HepG2 (cell line): ENCODE measurements at regions of chr13 and their contacts with region 1.

Region 1: GRCh38 chr13:107867701-107868661 is 347.4 kb downstream of the LIG4 start:
- DNase-seq: no peak
- ATAC-seq: peak; percentile 80
- H3K4me3 ChIP-seq: no peak overlapping the region; a peak in 1 of 6 replicates
- H3K27ac ChIP-seq: no peak overlapping the region
- H3K4me1 ChIP-seq: no peaks in the 10 kb centered on the region
- H3K27me3 ChIP-seq: peaks cover 2 to 23% of the 10 kb centered on the region in 2 experiments; a peak in 2 of 5 replicates
- CTCF ChIP-seq: peak; percentile 40
- EP300 ChIP-seq: no peak
- POLR2A ChIP-seq: no peak
- RAD21 ChIP-seq: no peak

Region 2: DNA sequence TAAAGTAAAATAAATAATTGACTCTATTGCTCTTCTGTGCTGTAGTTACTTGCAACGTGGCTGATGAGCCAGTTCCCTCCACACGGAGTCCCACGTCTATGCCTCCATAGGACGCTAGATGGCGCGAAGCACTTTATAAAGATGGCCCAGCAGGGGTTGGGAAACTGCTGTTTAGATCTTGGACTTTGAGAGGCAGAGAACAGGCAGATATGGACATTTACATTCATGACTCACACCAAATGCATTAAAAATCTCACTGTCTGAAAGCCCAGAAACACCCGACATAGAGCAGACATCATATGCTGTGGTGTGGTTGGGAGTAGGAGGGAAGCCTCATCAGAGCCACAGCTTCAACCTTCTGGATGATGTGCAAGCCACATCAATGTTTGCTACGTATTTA is 656.9 kb before region 1 on chr13:
- CTCF ChIA-PET with region 1: no interaction called
- POLR2A ChIA-PET with region 1: no interaction called
- in situ Hi-C with region 1: loop called (anchors 25 kb)
- intact Hi-C with region 1: no loop called
- DNase-seq: peak; percentile 78
- ATAC-seq: peak; percentile 100
- H3K4me3 ChIP-seq: no peak overlapping the region
- H3K27ac ChIP-seq: no peak overlapping the region
- H3K4me1 ChIP-seq: no peaks in the 10 kb centered on the region
- H3K27me3 ChIP-seq: peaks cover 0 to 26% of the 10 kb centered on the region in 2 experiments; a peak in 2 of 5 replicates
- CTCF ChIP-seq: peak; percentile 90
- EP300 ChIP-seq: no peak
- POLR2A ChIP-seq: no peak
- RAD21 ChIP-seq: no peak; the same call in 1 of the 2 replicates